MCF 10A (cell line): ENCODE measurements at regions of chr1 and their contacts with region 1.

Region 1: DNA sequence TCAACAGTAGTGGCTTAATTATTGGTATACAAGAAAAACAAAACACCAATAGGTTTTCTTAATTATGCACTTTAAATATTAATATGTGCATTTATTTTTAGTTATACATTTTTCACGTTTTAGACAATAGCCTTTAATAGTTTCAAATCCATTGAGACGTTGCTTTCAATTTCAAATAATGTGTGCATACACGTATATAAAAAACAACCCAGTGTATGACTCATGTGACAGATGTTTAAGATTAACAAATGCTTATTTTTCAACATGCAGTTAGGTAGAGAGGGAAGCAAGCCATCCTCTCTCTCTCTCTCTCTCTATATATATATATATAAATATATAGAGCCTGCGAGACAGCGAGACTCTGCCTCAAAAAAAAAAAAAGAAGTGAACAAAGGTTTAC is 24.3 kb downstream of the EYA3 start:
- DNase-seq: peak; percentile 61
- H3K4me3 Mint-ChIP-seq: peak overlapping the region; percentile 23
- H3K27ac Mint-ChIP-seq: no peak overlapping the region
- H3K4me1 Mint-ChIP-seq: peaks cover 24% of the 10 kb centered on the region
- H3K27me3 Mint-ChIP-seq: no peaks in the 10 kb centered on the region
- CTCF ChIP-seq: no peak

Region 2: DNA sequence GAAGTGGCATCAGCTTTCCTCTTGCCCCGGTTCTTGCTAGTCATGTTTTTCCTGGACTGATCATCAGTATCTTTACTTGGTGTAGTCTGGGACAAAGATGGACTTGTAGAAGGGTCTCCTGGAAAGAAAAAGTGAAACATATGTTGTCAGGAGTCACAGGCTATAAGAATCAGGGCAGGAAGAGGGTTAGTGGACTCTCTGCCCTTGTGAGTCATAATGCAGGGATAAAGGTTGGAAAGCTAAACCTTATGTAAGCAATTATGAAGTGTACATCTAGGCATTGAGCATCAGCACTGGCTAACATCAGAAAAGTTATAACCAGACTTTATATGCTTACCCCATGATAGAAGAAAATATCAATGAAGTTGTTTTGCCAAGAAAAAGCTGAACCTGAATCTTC is 53.1 kb before region 1 on chr1:
- CTCF ChIA-PET with region 1: no interaction called
- POLR2A ChIA-PET with region 1: no interaction called
- intact Hi-C with region 1: no loop called
- DNase-seq: no peak
- H3K4me3 Mint-ChIP-seq: no peak overlapping the region
- H3K27ac Mint-ChIP-seq: peak overlapping the region; percentile 49
- H3K4me1 Mint-ChIP-seq: no peaks in the 10 kb centered on the region
- H3K27me3 Mint-ChIP-seq: no peaks in the 10 kb centered on the region
- CTCF ChIP-seq: no peak

Region 3: DNA sequence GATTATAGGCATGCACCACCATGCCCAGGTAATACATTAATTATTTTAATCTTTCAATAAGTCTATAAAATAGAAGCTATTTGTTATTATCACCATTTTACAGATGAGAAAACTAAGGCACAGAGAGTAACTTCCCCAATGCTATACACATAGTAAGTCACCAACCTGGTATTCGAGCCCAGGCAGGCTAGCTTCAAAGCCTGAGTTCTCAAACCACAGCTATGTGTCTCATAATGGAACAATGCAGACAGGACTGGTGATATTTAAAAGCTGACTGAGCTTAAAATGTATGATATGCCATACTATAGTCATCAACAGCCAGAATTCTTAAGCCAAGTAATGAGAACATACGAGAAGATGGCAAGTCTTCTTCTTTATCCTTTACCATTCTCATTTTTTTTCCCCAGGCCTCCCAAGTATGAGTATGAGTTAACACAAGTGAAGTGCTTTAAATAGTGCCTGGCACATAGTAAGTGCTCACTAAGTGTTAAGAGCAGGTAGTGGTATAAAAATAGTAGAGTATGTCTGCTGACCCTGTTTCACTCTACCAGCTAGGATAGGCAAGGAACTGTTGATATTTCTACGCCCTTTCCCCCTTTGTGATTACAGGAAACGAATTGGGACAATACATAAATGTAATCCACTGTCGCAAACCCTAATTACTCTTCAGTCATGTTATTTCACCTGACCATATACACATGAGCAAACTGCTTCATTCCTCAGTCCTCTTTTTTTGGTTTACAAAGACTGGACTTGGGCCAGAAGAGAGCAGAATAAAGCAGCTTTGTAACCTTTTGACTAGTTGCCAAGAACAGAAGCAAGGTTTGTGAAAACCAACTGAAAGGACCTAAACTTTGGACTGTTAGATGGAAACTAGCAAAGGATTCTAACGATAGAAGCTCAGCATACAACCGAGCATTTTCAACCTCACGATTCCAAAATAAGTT is 14.9 kb after region 1 on chr1:
- CTCF ChIA-PET with region 1: no interaction called
- POLR2A ChIA-PET with region 1: interaction called, 20 read pairs
- intact Hi-C with region 1: loop called (anchors 2 kb)
- DNase-seq: no peak
- H3K4me3 Mint-ChIP-seq: no peak overlapping the region
- H3K27ac Mint-ChIP-seq: no peak overlapping the region
- H3K4me1 Mint-ChIP-seq: peaks cover 8% of the 10 kb centered on the region
- H3K27me3 Mint-ChIP-seq: no peaks in the 10 kb centered on the region
- CTCF ChIP-seq: no peak

Region 4: GRCh38 chr1:28104866-28105467 is 40.9 kb after region 1 on chr1:
- CTCF ChIA-PET with region 1: no interaction called
- POLR2A ChIA-PET with region 1: no interaction called
- intact Hi-C with region 1: no loop called
- DNase-seq: peak; percentile 76
- H3K4me3 Mint-ChIP-seq: no peak overlapping the region
- H3K27ac Mint-ChIP-seq: no peak overlapping the region
- H3K4me1 Mint-ChIP-seq: no peaks in the 10 kb centered on the region
- H3K27me3 Mint-ChIP-seq: no peaks in the 10 kb centered on the region
- CTCF ChIP-seq: no peak

Region 5: DNA sequence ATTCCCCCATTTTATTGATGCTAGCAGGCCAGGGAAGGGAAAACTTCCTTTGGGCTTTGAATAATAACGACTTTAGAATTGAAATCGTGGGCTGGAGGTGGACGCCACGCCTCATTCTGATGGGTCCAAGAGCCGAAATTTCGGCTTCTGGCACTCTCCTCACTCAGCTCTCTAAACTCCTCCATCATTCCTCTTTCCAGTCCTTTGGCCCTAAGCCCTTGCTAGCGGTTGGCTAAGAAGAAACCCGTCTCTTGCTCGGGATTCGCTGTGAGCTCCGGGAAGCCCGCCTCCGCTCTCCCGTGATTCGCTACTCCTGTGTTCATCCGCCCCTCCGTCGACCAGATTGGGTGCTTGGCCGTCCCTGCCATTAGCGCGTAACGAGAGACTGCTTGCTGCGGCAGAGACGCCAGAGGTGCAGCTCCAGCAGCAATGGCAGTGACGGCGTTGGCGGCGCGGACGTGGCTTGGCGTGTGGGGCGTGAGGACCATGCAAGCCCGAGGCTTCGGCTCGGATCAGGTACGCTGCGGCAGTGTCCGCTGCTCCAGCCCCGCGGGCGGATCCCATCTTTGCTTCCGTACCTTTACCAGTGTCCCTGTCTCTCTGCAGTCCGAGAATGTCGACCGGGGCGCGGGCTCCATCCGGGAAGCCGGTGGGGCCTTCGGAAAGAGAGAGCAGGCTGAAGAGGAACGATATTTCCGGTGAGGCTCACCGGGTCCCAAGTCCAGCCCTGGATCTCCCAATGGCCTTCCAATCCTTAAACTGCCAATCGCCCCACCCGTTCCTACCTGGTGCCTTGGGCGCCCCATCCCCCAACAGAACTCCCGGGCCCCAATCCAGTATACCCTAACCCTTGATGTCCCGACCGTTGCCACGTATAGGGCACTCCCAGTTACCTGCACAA is 171.9 kb after region 1 on chr1 and contains the start of gene ATP5IF1:
- CTCF ChIA-PET with region 1: no interaction called
- POLR2A ChIA-PET with region 1: interaction called, 11 read pairs
- intact Hi-C with region 1: no loop called
- DNase-seq: peak; percentile 99
- H3K4me3 Mint-ChIP-seq: no peak within 1 kb of the TSS
- H3K27ac Mint-ChIP-seq: no peak within 1 kb of the TSS
- H3K4me1 Mint-ChIP-seq: no peaks in the 10 kb centered on the region
- H3K27me3 Mint-ChIP-seq: no peaks in the 10 kb centered on the region
- CTCF ChIP-seq: no peak
- total RNA-seq, gene ATP5IF1: 214 and 232 TPM in 2 replicates

Region 6: GRCh38 chr1:28296401-28297261 is 232.6 kb after region 1 on chr1:
- CTCF ChIA-PET with region 1: no interaction called
- POLR2A ChIA-PET with region 1: no interaction called
- intact Hi-C with region 1: no loop called
- DNase-seq: no peak
- H3K4me3 Mint-ChIP-seq: no peak overlapping the region
- H3K27ac Mint-ChIP-seq: no peak overlapping the region
- H3K4me1 Mint-ChIP-seq: no peaks in the 10 kb centered on the region
- H3K27me3 Mint-ChIP-seq: no peaks in the 10 kb centered on the region
- CTCF ChIP-seq: no peak